Heart right ventricle (tissue), 16 donors: ENCODE measurements at regions of chrX and their contacts with region 1.

Region 1: GRCh38 chrX:153470435-153471363 is at the start of gene HAUS7:
- DNase-seq: peak; percentile 88 to 90
- ATAC-seq: peak; percentile 84 to 94 (median 90)
- H3K4me3 ChIP-seq: peak within 1 kb of the TSS; percentile 28 to 76 (median 68)
- H3K27ac ChIP-seq: peak within 1 kb of the TSS; percentile 59 to 84 (median 72)
- H3K4me1 ChIP-seq: peaks cover 0 to 33% (median 12%) of the 10 kb centered on the region in 9 donors
- H3K27me3 ChIP-seq: peaks cover 0 to 5% (median 0%) of the 10 kb centered on the region in 7 donors
- CTCF ChIP-seq: peak; percentile 32 to 86 (median 72)
- total RNA-seq, gene HAUS7: 12.7 to 25.7 (median 18.2) TPM

Region 2: GRCh38 chrX:152941328-152942106 is 529.2 kb before region 1 on chrX:
- intact Hi-C with region 1: loop called in 2 of 10 experiments (anchors 5 to 10 kb)
- DNase-seq: peak; percentile 89 to 90
- ATAC-seq: peak; percentile 94 to 99 (median 98)
- H3K4me3 ChIP-seq: peak overlapping the region; percentile 41 to 69 (median 60)
- H3K27ac ChIP-seq: peak overlapping the region in 9 of 10 donors; percentile 68 to 89 (median 82)
- H3K4me1 ChIP-seq: peaks cover 0 to 13% (median 0%) of the 10 kb centered on the region in 9 donors
- H3K27me3 ChIP-seq: no peaks in the 10 kb centered on the region
- CTCF ChIP-seq: peak; percentile 52 to 91 (median 83)

Region 3: GRCh38 chrX:152958524-152959465 is 511.9 kb before region 1 on chrX:
- intact Hi-C with region 1: loop called in 1 of 10 experiments (anchors 10 kb)
- DNase-seq: peak; percentile 86 to 87
- ATAC-seq: peak; percentile 94 to 99 (median 99)
- H3K4me3 ChIP-seq: peak overlapping the region in 9 of 10 donors; percentile 7 to 47 (median 39)
- H3K27ac ChIP-seq: peak overlapping the region in 8 of 10 donors; percentile 35 to 77 (median 62)
- H3K4me1 ChIP-seq: peaks cover 0 to 9% (median 0%) of the 10 kb centered on the region in 9 donors
- H3K27me3 ChIP-seq: peaks cover 0 to 18% (median 0%) of the 10 kb centered on the region in 7 donors
- CTCF ChIP-seq: peak; percentile 65 to 95 (median 83)

Region 4: GRCh38 chrX:153494541-153495361 is 24.1 kb after region 1 on chrX and contains the start of gene BGN:
- intact Hi-C with region 1: loop called in 2 of 10 experiments (anchors 2 kb)
- DNase-seq: peak; percentile 47 to 59
- ATAC-seq: peak; percentile 31 to 71 (median 64)
- H3K4me3 ChIP-seq: peak within 1 kb of the TSS; percentile 10 to 58 (median 50)
- H3K27ac ChIP-seq: peak within 1 kb of the TSS in 9 of 10 donors; percentile 52 to 81 (median 71)
- H3K4me1 ChIP-seq: peaks cover 0 to 21% (median 5%) of the 10 kb centered on the region in 9 donors
- H3K27me3 ChIP-seq: peaks cover 0 to 18% (median 0%) of the 10 kb centered on the region in 7 donors
- CTCF ChIP-seq: peak in 7 of 9 donors; percentile 8 to 58 (median 41)
- total RNA-seq, gene BGN: 38.7 to 202 (median 62.4) TPM

Region 5: GRCh38 chrX:153499876-153500275 is 29.2 kb after region 1 on chrX:
- intact Hi-C with region 1: loop called in 5 of 10 experiments (anchors 2 to 5 kb)
- DNase-seq: peak in 1 of 2 donors; percentile 51
- ATAC-seq: peak in 6 of 8 donors; percentile 7 to 55 (median 18)
- H3K4me3 ChIP-seq: peak overlapping the region in 5 of 10 donors; percentile 14 to 54 (median 36)
- H3K27ac ChIP-seq: peak overlapping the region in 3 of 10 donors; percentile 3 to 22 (median 21)
- H3K4me1 ChIP-seq: peaks cover 0 to 18% (median 0%) of the 10 kb centered on the region in 9 donors
- H3K27me3 ChIP-seq: peaks cover 0 to 18% (median 0%) of the 10 kb centered on the region in 7 donors
- CTCF ChIP-seq: no peak

Region 6: DNA sequence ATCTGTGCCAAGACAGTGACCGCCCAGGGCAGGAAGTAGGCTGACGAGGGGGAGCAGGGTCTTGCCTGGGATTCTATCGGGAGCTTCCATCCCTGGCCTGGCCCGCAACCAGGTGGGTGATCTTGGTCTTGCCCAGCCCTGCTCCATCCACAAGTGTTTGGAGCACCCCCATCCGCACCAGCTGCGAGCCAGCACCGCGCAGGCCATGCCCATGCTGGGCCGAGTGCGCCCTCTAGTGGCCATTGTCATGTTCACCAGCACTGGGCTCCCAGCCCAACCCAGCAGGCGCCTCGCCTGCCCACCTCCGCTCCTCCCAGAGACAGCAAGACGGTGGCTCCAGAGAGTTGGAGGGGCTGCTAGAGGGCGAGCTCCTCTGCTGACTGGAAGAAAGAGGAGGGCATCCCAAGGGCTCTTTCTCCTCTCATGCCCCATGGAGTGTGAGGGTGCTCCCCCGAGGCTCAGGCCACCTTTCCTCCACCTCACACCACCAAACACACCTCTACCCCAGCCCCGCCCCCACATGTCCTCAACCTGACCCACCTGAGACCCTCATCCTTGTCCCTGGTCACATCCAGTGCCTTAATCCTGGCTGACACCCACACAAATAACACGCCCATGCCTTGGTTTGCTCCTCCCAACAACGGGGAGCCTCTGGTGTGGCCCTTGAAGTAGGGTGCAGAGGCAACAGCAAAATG is 36.9 kb after region 1 on chrX:
- intact Hi-C with region 1: loop called in 7 of 10 experiments (anchors 2 to 5 kb)
- DNase-seq: peak; percentile 74 to 83
- ATAC-seq: peak; percentile 77 to 93 (median 86)
- H3K4me3 ChIP-seq: no peak overlapping the region
- H3K27ac ChIP-seq: peak overlapping the region in 1 of 10 donors; percentile 10
- H3K4me1 ChIP-seq: peaks cover 0 to 10% (median 0%) of the 10 kb centered on the region in 9 donors
- H3K27me3 ChIP-seq: peaks cover 0 to 10% (median 0%) of the 10 kb centered on the region in 7 donors
- CTCF ChIP-seq: peak; percentile 65 to 95 (median 82)

Region 7: DNA sequence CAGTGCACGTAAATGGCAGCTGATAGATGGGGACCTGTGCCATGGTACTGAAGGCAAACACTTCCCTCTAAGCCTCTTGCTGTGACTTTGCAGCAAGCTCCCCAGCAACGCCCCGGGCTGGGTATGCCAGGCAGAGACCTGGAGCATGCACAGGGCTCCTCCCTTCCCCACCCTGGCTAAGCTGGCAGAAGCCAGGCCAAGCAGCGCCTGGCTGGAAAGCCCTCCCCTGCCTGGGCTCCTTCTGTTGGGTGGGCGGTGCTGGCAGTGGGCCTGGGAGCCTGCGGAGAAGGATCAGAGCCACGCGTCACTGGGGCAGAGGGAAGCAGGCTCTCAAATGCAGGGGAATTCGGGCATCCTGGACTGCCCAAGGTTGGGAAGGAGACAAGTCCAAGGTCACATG is 50.3 kb after region 1 on chrX:
- intact Hi-C with region 1: no loop called
- DNase-seq: no peak
- ATAC-seq: peak in 5 of 8 donors; percentile 14 to 46 (median 16)
- H3K4me3 ChIP-seq: no peak overlapping the region
- H3K27ac ChIP-seq: no peak overlapping the region
- H3K4me1 ChIP-seq: no peaks in the 10 kb centered on the region
- H3K27me3 ChIP-seq: peaks cover 0 to 83% (median 46%) of the 10 kb centered on the region in 7 donors
- CTCF ChIP-seq: no peak